ENCODE measurements at regions of chr9 and their contacts with region 1.

Region 1: DNA sequence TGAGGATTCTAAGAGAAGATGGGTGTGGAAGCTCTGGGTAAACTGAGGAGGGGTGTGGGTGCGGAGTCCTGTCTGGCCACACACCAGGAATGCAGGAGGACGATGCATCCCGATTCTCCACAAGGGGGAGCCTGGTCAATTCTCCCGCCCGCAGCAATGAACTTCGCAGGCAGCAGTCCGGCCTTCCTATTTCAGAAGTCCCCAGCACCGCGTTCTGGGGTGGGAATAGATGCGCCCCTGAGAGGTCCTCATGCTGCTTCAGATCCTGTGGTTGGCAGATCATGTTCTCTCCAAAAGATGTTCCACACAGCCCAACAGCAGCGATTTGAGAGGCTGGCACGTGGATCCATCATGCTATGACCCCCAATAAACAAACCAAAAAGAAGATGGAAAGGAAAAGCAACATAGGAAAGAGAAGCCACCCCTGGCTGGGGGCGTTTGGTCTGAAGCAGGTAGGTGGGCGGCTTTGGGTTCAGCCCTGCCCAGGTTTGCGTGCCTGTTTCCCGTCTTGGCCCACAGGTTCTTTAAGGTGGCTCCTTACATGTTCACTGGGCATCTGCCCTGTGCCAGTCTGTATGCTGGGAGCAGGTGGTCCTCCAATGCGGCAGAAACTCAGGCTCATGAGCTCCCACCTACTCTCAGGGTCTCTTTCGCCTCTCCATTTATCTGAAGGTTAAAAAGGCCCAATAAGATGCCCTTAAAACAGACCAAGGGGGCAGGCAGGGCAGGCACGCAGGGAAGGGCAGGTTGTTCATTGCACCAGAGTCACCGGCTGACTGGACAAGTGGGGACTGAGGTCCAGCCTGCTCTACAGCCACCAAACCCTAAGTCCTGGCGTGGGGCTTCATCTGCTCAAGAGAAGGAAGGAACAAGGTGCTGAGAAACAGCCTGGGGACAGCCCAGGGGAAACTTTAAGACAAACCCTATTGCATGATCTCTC is 171.6 kb downstream of the PAX5 start:
- DNase-seq: peak; percentile 46
- H3K4me3 ChIP-seq: no peak overlapping the region
- H3K27ac ChIP-seq: no peak overlapping the region
- H3K4me1 ChIP-seq: peaks cover 0 to 9% (median 3%) of the 10 kb centered on the region in 4 donors
- H3K27me3 ChIP-seq: peaks cover 18% of the 10 kb centered on the region
- CTCF ChIP-seq: peak; percentile 44 to 60 (median 58)
- EP300 ChIP-seq: no peak
- POLR2A ChIP-seq: no peak

Region 2: DNA sequence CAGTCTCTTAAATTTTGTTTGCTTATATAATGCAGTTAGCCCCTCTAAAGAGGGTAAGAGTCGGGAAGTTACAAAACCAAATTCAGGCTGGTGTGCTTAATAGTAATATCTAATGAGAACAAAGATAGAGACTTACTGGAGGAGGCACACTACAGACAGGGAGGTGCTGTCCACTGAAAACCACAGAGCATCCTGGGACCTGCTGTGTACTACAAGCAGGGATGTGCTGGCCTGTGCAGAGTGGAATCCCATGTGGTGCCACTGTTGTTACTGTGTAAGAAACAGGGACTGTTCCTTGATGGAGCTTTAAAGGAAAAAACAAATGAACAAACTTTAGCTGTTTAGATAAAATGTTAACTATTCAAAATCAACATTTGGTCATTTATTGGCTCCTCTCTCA is 504.8 kb before region 1 on chr9:
- in situ Hi-C with region 1: no loop called
- intact Hi-C with region 1: no loop called
- DNase-seq: no peak
- H3K4me3 ChIP-seq: no peak overlapping the region
- H3K27ac ChIP-seq: no peak overlapping the region
- H3K4me1 ChIP-seq: no peaks in the 10 kb centered on the region
- H3K27me3 ChIP-seq: no peaks in the 10 kb centered on the region
- CTCF ChIP-seq: no peak
- EP300 ChIP-seq: no peak
- POLR2A ChIP-seq: no peak

Region 3: GRCh38 chr9:36891341-36891959 is 29.0 kb after region 1 on chr9:
- in situ Hi-C with region 1: no loop called
- intact Hi-C with region 1: no loop called
- DNase-seq: no peak
- H3K4me3 ChIP-seq: no peak overlapping the region
- H3K27ac ChIP-seq: no peak overlapping the region
- H3K4me1 ChIP-seq: no peaks in the 10 kb centered on the region
- H3K27me3 ChIP-seq: peaks cover 15% of the 10 kb centered on the region
- CTCF ChIP-seq: no peak
- EP300 ChIP-seq: no peak
- POLR2A ChIP-seq: no peak

Region 4: DNA sequence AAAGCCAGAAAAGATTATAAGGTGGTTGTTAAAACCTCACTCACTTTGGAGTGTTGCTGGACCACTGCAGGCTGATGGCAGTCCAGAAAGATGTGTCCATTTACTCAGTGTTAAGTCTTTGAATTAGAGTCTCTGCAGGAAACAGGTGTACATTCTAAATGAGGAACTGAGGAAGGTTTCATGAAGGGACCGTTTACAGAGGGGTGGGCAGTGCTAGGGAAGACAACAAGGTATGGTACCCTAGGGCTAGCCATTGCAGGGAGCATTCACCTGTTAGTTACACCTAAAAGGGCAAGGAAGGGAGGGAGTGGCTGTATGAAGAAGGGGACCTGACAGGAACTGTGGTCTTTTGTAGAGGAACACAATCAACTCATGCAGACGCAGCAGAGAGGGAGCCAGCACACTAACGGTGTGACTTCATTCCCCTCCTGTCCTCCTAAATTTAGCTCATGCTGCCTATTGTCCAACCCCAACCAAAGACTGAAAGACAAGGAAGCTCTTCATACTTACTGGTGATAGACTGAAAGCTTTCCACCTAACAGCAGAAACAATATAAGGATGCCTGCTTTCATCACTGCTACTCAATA is 203.8 kb after region 1 on chr9:
- in situ Hi-C with region 1: no loop called
- intact Hi-C with region 1: loop called (anchors 10 kb)
- DNase-seq: no peak
- H3K4me3 ChIP-seq: no peak overlapping the region
- H3K27ac ChIP-seq: no peak overlapping the region
- H3K4me1 ChIP-seq: no peaks in the 10 kb centered on the region
- H3K27me3 ChIP-seq: peaks cover 42% of the 10 kb centered on the region
- CTCF ChIP-seq: no peak
- EP300 ChIP-seq: no peak
- POLR2A ChIP-seq: no peak

Region 5: GRCh38 chr9:37174247-37174646 is 311.8 kb after region 1 on chr9:
- in situ Hi-C with region 1: no loop called
- intact Hi-C with region 1: no loop called
- DNase-seq: no peak
- H3K4me3 ChIP-seq: no peak overlapping the region
- H3K27ac ChIP-seq: no peak overlapping the region
- H3K4me1 ChIP-seq: no peaks in the 10 kb centered on the region
- H3K27me3 ChIP-seq: no peaks in the 10 kb centered on the region
- CTCF ChIP-seq: no peak
- EP300 ChIP-seq: no peak
- POLR2A ChIP-seq: no peak